ENCODE measurements at regions of chr11 and their contacts with region 1.

Region 1: GRCh38 chr11:62601394-62602140 is at the start of gene MTA2:
- DNase-seq: peak; percentile 100
- H3K4me3 Mint-ChIP-seq: peak within 1 kb of the TSS; percentile 85
- H3K27ac Mint-ChIP-seq: peak within 1 kb of the TSS; percentile 88
- H3K4me1 Mint-ChIP-seq: peaks cover 53% of the 10 kb centered on the region
- H3K27me3 Mint-ChIP-seq: no peaks in the 10 kb centered on the region
- total RNA-seq, gene MTA2: 226 TPM

Region 2: GRCh38 chr11:62461740-62462507 is 139.6 kb before region 1 on chr11:
- CTCF ChIA-PET with region 1: no interaction called
- POLR2A ChIA-PET with region 1: no interaction called
- DNase-seq: peak; percentile 17
- H3K4me3 Mint-ChIP-seq: peak overlapping the region; percentile 24
- H3K27ac Mint-ChIP-seq: peak overlapping the region; percentile 63
- H3K4me1 Mint-ChIP-seq: peaks cover 23% of the 10 kb centered on the region
- H3K27me3 Mint-ChIP-seq: peaks cover 3% of the 10 kb centered on the region

Region 3: DNA sequence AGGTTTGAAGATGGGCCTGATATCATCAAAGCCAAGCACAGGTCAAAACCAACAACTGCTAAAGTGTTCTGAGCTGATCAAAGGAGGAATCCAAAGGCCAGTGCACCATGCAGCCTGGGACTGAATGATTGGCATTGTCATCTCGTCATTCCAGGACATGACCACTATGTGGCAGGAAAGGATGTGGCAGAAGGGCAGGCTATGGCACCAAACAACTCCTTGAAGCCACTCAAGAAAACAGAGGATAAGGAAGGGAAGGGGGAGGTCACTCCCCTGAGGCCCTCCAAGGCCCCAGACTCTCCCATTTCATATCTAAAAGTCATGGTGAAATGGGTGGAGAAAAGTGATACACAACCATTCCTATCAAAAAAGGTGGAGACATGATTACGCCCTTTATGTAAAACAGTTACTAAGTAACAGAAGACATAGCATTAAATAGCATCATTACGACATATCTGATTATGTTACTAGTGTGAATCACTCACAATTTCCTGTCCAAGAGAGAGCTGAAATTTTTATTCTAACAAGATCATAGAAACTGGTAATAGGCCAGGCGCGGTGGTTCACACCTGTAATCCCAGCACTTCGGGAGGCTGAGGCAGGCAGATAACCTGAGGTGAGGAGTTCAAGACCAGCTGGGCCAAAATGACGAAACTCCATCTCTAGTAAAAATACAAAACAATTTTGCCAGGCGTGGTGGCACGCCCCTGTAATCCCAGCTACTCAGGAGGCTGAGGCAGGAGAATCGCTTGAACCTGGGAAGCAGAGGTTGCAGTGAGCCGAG is 104.2 kb before region 1 on chr11:
- CTCF ChIA-PET with region 1: no interaction called
- POLR2A ChIA-PET with region 1: no interaction called
- DNase-seq: peak; percentile 21
- H3K4me3 Mint-ChIP-seq: no peak overlapping the region
- H3K27ac Mint-ChIP-seq: no peak overlapping the region
- H3K4me1 Mint-ChIP-seq: peaks cover 16% of the 10 kb centered on the region
- H3K27me3 Mint-ChIP-seq: peaks cover 2% of the 10 kb centered on the region

Region 4: DNA sequence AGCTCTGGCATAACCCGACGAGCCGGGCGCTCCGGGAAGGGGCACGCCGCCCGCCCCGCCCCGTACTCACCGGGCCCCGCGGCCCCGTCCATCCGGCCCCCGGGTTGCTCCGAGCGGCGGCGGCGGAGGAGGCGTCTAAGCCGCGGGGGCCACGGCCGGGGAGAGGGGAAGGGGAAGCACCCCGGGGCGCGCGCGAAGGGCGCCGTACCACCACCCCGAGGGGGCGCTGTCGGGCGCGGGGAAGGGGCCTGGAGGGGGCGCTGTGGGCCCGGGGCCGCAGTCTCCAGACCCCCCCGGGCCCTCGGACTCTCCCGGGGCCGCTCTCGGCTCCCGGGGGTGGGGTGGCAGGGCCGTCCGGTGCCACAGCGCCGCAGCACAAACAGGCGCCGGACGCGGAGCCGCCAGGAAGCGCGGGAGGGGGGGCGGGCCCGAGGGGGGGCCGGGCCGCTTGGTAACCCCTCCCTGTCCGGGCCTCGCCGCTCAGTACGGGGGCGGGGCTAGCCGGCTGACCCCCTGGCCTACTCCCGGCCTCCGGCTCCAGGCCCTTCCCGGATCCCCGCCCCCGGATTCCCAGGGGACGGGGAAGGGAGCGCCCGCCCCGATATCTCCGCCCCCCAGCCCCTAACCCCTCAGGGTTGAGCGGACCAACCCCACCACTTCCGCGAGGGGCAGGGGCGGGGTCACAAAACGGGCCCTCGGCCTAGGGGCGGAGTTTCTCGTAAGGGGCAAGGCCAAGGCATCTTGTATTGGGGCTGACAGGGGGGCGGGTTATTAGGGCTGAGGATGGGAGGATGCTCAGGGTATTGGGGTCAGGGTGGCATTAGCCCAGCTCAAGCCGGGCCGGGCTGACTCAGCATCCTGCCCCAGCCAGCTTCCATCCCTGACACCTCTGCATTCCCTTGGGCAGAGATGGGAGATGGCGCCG is 11.1 kb after region 1 on chr11 and contains the starts of genes EML3 and ROM1:
- CTCF ChIA-PET with region 1: interaction called, 14 read pairs
- POLR2A ChIA-PET with region 1: interaction called, 84 read pairs
- DNase-seq: peak; percentile 91
- H3K4me3 Mint-ChIP-seq: peak within 1 kb of the TSS; percentile 97
- H3K27ac Mint-ChIP-seq: peak within 1 kb of the TSS; percentile 93
- H3K4me1 Mint-ChIP-seq: peaks cover 65% of the 10 kb centered on the region
- H3K27me3 Mint-ChIP-seq: no peaks in the 10 kb centered on the region
- total RNA-seq, gene EML3: 121 to 122 TPM
- total RNA-seq, gene ROM1: 1.6 to 2.2 TPM

Region 5: GRCh38 chr11:62621567-62622470 is 20.3 kb after region 1 on chr11 and contains the start of gene B3GAT3:
- CTCF ChIA-PET with region 1: interaction called, 9 read pairs
- POLR2A ChIA-PET with region 1: interaction called, 27 read pairs
- DNase-seq: peak; percentile 97
- H3K4me3 Mint-ChIP-seq: peak within 1 kb of the TSS; percentile 87
- H3K27ac Mint-ChIP-seq: peak within 1 kb of the TSS; percentile 98
- H3K4me1 Mint-ChIP-seq: peaks cover 29% of the 10 kb centered on the region
- H3K27me3 Mint-ChIP-seq: no peaks in the 10 kb centered on the region
- total RNA-seq, gene B3GAT3: 58.9 to 67.1 TPM

Region 6: DNA sequence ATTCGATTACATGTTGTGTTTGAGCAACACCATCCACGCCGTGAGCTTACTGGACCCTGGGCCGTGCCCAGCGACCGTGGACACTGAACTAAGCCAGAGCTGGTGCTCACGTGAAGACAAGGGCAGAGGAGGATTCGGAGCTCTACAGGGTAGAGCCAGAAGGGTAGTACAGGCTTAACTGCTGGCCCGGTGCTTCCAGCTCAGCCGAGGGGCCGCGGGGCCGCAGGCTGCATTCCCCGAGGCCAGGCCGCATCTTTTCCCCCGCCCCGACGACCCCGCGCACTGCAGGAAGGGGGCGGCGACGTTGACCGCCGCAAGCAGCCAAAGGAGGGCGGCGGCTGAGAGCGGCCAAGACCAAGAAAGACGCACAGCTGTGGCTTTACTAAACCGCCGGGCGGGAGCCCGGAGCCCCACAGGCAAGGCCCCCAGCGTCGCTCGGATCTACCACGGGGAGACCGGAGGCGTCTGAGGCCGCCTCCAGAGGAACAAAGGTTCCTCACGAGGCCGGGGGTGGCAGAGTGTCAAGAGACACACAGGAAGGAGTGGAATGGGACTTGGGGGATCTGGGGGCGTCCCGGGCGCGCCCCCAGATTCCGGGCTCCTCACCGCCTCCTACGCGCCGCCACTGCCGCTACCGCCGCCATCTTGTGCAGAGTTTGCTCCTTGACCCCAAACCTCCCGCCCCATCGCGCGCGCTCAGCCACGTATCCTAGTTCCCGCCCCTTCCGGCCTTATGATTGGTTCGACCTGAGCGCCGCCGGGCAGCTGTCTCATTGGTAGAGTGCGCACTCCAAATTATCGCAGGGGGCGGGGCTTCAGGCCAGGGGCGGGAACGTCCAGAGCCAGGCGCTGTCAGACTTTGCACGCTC is 44.6 kb after region 1 on chr11 and contains the start of gene GANAB:
- CTCF ChIA-PET with region 1: no interaction called
- POLR2A ChIA-PET with region 1: interaction called, 12 read pairs
- DNase-seq: peak; percentile 99
- H3K4me3 Mint-ChIP-seq: peak within 1 kb of the TSS; percentile 99
- H3K27ac Mint-ChIP-seq: peak within 1 kb of the TSS; percentile 94
- H3K4me1 Mint-ChIP-seq: peaks cover 47% of the 10 kb centered on the region
- H3K27me3 Mint-ChIP-seq: no peaks in the 10 kb centered on the region
- total RNA-seq, gene GANAB: 278 to 284 TPM

Region 7: GRCh38 chr11:62652161-62653006 is 50.8 kb after region 1 on chr11:
- CTCF ChIA-PET with region 1: no interaction called
- POLR2A ChIA-PET with region 1: interaction called, 18 read pairs
- DNase-seq: peak; percentile 47
- H3K4me3 Mint-ChIP-seq: peak overlapping the region; percentile 91
- H3K27ac Mint-ChIP-seq: peak overlapping the region; percentile 85
- H3K4me1 Mint-ChIP-seq: peaks cover 34% of the 10 kb centered on the region
- H3K27me3 Mint-ChIP-seq: no peaks in the 10 kb centered on the region

Measured in activated CD4-positive, alpha-beta memory T cell treated with anti-CD3 and anti-CD28 coated beads, Interleukin-2, amount 10 ng/mL, durations not matched to agents 7 days and 5 days (primary cell).